Colonic mucosa (tissue), 4 donors: ENCODE measurements at regions of chr1 and their contacts with region 1.

Region 1: GRCh38 chr1:26109229-26110164 is 2.1 kb upstream of the PDIK1L start:
- DNase-seq: no peak
- H3K4me3 ChIP-seq: no peak overlapping the region
- H3K27ac ChIP-seq: no peak overlapping the region
- H3K4me1 ChIP-seq: no peaks in the 10 kb centered on the region
- H3K27me3 ChIP-seq: no peaks in the 10 kb centered on the region
- CTCF ChIP-seq: no peak

Region 2: DNA sequence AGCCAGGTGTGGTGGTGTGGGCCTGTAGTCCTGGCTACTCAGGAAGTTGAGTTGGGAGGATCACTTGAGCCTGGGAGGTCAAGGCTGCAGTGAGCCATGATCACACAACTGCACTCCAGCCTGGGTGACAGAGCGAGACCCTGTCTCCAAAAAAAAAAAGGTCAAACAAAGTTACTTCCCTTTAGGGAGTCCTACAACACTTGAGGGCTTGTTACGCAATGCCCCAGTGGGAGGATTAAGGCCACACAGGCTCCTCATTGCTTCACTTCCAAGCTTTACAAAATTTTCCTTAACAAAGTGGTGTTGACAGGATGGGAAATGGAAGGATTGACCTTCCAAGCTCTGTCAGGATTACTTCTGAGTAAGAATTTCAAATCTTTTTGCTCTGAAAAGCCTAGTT is 94.1 kb before region 1 on chr1:
- intact Hi-C with region 1: no loop called
- DNase-seq: no peak
- H3K4me3 ChIP-seq: no peak overlapping the region
- H3K27ac ChIP-seq: no peak overlapping the region
- H3K4me1 ChIP-seq: no peaks in the 10 kb centered on the region
- H3K27me3 ChIP-seq: no peaks in the 10 kb centered on the region
- CTCF ChIP-seq: no peak

Region 3: GRCh38 chr1:26161415-26162219 is 52.1 kb after region 1 on chr1:
- intact Hi-C with region 1: loop called (anchors 5 kb)
- DNase-seq: peak; percentile 56
- H3K4me3 ChIP-seq: peak overlapping the region; percentile 36
- H3K27ac ChIP-seq: no peak overlapping the region
- H3K4me1 ChIP-seq: peaks cover 6% of the 10 kb centered on the region
- H3K27me3 ChIP-seq: no peaks in the 10 kb centered on the region
- CTCF ChIP-seq: no peak